HEK293 (cell line): ENCODE measurements at regions of chr6 and their contacts with region 1.

Region 1: DNA sequence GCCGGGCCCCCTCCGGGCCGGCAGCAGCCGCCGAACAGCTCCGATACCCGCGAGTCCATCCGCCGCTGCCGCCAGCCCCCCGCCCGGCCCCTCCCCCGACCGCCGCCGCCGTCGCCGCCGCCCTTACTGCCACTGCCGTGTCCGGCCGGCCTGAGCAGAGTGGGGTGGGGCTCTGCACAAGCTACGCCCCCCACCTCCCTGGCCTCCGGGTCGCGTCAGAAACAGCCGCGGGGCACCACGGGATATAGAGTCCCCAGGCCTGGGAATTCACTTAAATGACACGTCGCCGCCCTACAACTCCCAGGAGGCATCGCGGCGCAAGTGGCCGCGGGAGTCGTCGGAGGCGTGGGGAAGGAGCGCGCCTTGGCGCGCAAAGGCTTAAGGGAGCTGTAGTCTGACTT is at the start of gene GTPBP2:
- H3K4me3 ChIP-seq: peak within 1 kb of the TSS; percentile 77
- H3K27ac ChIP-seq: peak within 1 kb of the TSS; percentile 90
- H3K4me1 ChIP-seq: 0 out of 2 replicates have a peak, but pooled peaks cover 8% of the 10 kb centered on the region
- CTCF ChIP-seq: no peak

Region 2: DNA sequence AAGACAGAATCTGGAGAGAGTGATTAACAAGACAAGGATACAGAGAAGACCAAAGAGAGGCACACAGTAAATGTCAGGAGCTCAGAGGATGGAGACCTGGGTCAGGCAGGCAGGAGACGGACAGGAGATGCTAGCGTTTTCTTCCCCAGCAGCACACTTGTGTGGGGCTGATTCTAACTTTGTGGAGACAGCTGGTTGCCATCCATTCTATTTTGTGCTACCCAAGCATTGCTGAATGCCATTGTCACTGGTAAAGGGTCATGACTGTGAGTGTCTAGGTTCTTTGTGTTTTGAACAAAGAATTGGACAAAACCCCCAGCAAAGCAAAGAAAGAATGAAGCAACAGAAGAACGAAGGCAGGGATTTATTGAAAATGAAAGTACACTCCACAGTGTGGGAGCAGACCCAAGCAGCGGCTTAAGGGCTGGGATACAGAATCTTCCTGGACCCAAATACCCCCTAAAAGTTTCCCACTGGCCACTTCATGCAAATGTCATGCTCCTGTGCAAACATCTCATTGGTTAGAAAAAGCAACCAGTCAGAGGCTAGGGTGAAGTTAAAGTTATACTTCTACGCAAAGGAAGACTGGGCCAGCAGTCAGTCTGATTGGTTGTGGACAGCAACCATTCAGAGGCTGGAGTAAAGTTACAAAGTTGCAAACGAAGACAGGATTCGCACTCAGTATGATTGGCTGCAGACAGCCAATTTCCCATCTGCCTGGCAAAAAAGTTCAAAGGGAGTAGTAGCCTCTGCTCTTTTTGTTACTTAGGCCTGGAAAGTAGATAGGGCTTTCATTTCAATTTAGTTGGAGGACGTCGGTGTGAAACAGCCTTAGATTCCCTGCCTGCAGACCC is 535.4 kb before region 1 on chr6:
- CTCF ChIA-PET with region 1: no interaction called
- POLR2A ChIA-PET with region 1: no interaction called
- H3K4me3 ChIP-seq: no peak overlapping the region
- H3K27ac ChIP-seq: no peak overlapping the region
- H3K4me1 ChIP-seq: peaks cover 60% of the 10 kb centered on the region
- CTCF ChIP-seq: no peak

Region 3: DNA sequence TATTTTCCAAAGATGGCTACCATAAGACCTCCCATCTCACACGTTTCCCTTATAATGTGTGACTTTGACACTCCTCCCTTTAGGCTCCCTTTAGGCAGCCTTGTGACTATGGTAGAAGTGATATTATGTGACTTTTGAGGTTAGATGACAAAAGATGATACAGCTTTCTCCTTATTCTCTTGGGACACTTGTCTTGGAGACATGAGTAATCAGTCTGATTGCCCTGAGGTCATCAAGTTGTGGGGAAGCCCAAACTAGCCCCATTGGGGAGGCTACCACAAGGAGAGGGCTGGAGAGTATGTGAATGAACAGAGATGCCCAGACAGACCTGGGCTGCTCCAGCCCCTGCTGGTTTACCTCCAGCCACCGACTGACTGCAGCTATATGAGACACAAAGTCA is 163.2 kb before region 1 on chr6:
- CTCF ChIA-PET with region 1: no interaction called
- POLR2A ChIA-PET with region 1: no interaction called
- H3K4me3 ChIP-seq: no peak overlapping the region
- H3K27ac ChIP-seq: no peak overlapping the region
- H3K4me1 ChIP-seq: peaks cover 5% of the 10 kb centered on the region; the same call in 1 of the 2 replicates
- CTCF ChIP-seq: no peak

Region 4: GRCh38 chr6:43575772-43576551 is 53.1 kb before region 1 on chr6 and contains the starts of genes POLH and XPO5:
- CTCF ChIA-PET with region 1: interaction called, 3 read pairs
- POLR2A ChIA-PET with region 1: interaction called, 40 read pairs
- H3K4me3 ChIP-seq: peak within 1 kb of the TSS; percentile 98
- H3K27ac ChIP-seq: peak within 1 kb of the TSS; percentile 88
- H3K4me1 ChIP-seq: 0 out of 2 replicates have a peak, but pooled peaks cover 4% of the 10 kb centered on the region
- CTCF ChIP-seq: no peak; the same call in 1 of the 2 replicates

Region 5: DNA sequence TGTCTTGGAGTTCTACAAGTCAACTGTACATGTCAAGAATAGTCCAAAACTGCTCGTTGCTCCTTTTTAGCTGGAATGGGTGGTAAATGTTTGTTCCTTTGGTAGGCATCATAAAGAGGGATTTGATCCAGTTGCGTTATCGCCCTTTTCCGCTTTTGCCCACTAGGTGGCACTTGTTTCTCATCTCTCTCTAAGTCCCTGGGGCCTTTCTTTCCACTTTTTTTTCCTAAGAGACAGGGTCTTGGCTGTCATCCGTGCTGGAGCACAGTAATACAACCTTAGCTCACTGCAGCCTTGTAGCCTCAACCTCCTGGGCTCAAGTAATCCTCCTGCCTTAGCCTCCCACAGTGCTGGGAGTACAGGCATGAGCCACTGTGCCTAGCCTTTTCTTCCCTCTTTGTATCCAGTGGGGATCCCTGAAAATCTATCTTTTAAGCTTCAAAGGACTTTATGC is 20.8 kb before region 1 on chr6:
- CTCF ChIA-PET with region 1: interaction called, 15 read pairs
- POLR2A ChIA-PET with region 1: interaction called, 9 read pairs
- H3K4me3 ChIP-seq: no peak overlapping the region
- H3K27ac ChIP-seq: no peak overlapping the region
- H3K4me1 ChIP-seq: no peaks in the 10 kb centered on the region
- CTCF ChIP-seq: peak; percentile 83

Region 6: DNA sequence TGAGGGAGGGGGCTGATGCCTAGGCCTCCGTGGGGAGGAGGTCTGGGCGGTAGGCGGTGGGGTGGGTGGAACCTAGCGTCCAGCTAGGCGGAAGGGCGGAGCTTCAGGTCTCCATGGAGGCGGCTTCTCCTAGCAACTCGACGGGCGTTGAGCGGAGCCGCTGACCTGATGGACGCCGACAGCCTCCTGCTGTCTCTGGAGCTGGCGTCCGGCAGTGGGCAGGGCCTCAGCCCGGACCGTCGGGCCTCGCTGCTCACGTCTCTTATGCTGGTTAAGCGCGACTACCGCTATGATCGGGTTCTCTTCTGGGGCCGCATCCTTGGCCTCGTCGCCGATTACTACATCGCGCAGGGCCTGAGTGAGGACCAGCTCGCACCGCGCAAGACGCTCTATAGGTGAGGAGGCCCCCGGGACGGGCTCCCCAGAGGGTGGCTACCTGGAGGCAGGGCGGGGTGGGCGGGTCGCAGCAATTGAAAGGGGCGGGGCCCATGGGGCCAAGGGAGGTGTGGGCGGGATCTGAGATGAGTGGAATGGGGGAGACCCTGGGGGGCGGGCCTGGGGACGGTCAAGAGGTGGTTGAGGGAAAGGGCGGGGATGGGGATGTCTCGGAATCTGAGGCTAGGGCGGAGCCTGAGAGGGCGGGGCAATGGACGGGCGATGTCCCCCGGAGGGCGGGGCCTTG is 16.0 kb after region 1 on chr6 and contains the start of gene RSPH9:
- CTCF ChIA-PET with region 1: interaction called, 3 read pairs
- POLR2A ChIA-PET with region 1: interaction called, 40 read pairs
- H3K4me3 ChIP-seq: peak within 1 kb of the TSS; percentile 37
- H3K27ac ChIP-seq: peak within 1 kb of the TSS; percentile 46; the same call in 1 of the 2 replicates
- H3K4me1 ChIP-seq: peaks cover 7% of the 10 kb centered on the region
- CTCF ChIP-seq: no peak

Region 7: DNA sequence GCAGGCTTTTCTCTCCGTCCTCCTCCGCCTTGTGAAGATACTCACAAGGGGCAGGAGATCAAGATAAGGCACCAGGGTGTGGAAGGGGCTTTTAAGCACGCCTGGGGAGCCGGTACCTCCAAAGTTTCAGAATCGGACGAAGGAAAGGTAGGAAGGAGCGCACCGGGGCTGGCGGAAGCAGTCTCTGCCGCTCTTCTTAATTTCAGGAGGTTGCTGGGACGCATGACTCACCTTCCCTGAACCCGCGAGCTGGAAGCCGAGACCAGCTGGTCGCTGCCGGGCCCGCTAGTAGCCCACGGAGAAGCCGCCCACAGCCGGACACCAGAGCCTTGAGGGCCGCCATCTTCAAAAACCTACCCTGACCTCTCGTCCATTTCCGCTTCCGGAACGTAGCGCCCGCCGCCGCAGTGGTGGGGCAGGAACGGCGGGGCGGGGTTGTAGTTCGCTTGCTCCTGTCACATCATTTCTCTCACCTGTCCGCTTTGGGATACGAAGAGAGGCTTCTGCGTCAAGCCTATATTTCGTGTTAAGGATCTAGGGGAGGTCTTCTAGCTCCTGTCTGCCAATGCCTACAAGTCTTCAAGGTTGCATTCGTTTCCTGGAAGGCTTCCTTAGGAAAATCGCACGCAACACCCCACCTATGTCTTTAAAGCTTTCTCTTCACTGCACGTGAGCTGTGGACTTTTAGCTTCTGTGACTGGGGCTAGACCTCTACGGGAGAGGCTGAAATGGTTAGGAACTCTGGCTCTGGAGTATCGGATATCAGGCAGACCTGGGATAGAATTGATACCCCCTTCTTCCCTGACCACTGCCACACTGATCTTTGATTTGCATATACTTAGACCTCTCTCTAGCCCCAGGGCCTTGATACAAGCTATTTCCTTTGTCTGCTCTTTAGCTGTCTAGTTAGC is 58.6 kb after region 1 on chr6 and contains the start of gene MRPS18A:
- CTCF ChIA-PET with region 1: no interaction called
- POLR2A ChIA-PET with region 1: interaction called, 11 read pairs
- H3K4me3 ChIP-seq: peak within 1 kb of the TSS; percentile 91
- H3K27ac ChIP-seq: peak within 1 kb of the TSS; percentile 56
- H3K4me1 ChIP-seq: peaks cover 24% of the 10 kb centered on the region
- CTCF ChIP-seq: no peak

Region 8: DNA sequence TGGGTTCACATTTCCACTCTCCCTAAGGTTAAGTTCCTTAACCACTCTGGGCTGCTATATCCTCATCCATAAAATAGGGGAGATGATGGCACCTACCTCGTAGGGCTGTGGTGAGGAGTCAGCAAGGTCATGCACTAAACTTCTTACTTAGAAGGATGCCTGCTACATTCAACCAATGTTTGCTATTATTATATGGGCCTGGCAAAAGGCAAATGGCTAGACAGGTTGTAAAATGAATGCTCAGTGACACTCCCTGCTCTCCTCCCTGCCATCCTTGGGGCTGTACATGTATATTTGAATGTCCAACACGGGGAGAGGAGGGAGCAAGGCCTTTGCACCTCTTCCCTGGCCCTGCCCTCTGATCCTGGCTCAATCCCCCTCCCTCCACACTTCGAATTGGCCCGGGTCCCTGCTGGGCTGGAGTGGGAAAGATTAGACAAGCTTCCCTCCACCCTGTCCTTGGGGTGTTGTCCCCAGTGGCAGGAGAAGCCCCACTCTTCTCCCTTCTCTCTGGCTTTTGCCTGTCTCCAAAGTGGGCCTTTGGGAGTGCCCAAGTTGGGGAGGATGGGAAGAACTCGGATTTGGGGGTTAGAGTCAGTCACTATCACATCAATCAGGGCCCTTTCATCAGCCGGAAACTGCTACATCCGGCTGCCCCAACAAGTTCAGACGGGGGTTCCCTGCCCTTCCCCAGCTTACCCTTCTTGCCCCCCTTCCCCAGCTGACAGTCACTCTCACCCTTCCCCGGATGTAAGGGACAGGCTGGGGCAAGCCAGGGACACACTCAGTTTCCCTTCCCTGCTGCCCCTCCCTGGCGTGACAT is 104.6 kb after region 1 on chr6:
- CTCF ChIA-PET with region 1: no interaction called
- POLR2A ChIA-PET with region 1: no interaction called
- H3K4me3 ChIP-seq: no peak overlapping the region
- H3K27ac ChIP-seq: no peak overlapping the region
- H3K4me1 ChIP-seq: no peaks in the 10 kb centered on the region
- CTCF ChIP-seq: no peak